ENCODE measurements at regions of chr1 and their contacts with region 1.

Region 1: DNA sequence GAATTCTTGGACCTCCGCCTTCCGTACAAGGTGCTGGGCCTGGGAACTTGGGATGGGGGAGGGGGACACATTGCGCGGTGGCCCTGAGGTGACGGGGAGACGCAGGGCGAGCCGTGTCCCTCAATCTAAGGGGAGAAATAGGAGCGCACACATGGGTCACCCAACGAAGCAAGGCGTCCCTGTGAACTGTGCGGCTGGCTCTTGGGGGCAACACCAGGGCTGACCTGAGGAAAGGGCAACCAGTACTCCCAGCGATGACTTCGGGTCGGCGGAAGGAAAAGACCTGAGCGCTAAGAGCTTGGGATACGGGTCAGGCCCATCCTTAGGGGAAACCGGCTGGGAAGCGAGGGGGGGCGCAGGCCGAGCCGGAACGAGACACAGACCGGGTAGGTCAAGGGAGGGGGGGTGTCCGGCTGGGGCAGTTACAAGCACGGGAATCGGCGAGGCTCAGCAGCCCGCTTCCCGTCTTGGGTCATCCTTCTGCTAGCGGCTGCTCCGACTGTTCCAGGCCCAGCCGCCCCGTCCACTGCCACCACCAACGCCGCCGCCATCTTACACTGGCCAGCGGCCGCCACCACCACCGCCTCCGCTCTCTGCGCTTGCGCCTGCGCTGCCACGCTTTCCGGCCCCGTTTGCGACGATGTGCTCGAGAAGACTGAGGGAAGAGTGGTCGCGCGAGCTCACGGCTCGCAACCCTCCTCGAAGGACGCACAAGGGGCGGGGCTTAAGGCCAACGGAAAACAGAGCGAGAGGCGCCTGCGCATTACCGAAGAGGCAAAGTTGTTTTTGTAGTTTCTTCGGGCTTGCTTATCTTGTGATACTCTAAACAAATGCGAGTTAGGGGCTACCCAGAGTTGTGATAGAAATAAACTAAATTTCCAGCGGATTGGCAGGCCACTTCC is at the start of gene DCAF8:
- DNase-seq: peak; percentile 90 to 99
- H3K4me3 ChIP-seq: peak within 1 kb of the TSS; percentile 85 to 98
- H3K27ac ChIP-seq: peak within 1 kb of the TSS; percentile 98
- H3K4me1 ChIP-seq: peaks cover 0 to 24% of the 10 kb centered on the region in 2 donors
- H3K27me3 ChIP-seq: no peaks in the 10 kb centered on the region
- CTCF ChIP-seq: no peak
- total RNA-seq, gene DCAF8: 68.9 TPM

Region 2: DNA sequence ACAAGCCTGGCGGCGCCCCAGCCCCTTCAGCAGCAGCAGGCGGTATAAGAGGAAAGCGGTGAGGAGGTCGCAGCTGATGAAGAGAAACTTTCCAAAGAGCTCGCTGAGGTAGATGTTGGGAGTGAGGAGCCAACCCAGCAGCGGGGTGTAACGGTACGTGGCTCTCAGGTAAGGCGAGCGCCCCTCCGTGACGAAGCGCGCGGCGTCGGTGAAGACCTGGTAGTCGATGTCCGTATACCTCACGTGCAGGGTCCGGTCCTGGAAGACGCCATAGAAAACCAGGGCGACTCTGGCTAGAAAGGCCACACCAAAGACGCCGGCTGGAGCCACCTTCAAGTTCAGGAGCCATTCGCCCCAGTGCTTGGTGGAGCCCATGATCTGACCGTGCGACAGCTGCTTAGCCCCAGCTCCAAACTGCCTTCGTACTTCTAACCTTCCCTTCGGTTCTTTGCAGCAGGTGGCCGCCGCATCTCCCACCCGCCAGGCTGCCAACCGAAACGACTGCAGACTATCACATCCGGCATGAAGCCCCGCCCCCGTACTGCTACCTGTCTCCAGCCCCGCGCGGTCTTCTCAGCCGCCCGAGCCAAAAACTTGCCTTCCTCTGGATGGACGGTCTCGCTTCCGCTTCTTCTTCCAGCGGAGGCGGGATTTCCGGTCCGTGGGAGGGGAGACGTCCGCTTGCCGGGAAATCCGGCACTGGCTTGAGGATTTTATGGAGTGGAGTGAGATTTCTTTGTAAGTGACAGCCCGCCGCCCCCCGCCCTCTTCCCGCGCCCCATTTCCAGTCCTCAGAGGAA is 230.6 kb before region 1 on chr1 and contains the start of gene PIGM:
- intact Hi-C with region 1: loop called (anchors 5 kb)
- DNase-seq: peak; percentile 73 to 96
- H3K4me3 ChIP-seq: peak within 1 kb of the TSS; percentile 78 to 82
- H3K27ac ChIP-seq: peak within 1 kb of the TSS; percentile 37 to 71
- H3K4me1 ChIP-seq: peaks cover 0 to 9% of the 10 kb centered on the region in 2 donors
- H3K27me3 ChIP-seq: no peaks in the 10 kb centered on the region
- CTCF ChIP-seq: no peak
- total RNA-seq, gene PIGM: 6.1 TPM

Region 3: GRCh38 chr1:160205242-160206035 is 56.7 kb before region 1 on chr1 and contains the start of gene PEA15:
- intact Hi-C with region 1: loop called (anchors 5 kb)
- DNase-seq: peak in 1 of 2 donors; percentile 85
- H3K4me3 ChIP-seq: peak within 1 kb of the TSS; percentile 87 to 94
- H3K27ac ChIP-seq: peak within 1 kb of the TSS; percentile 94 to 98
- H3K4me1 ChIP-seq: peaks cover under 1 to 42% of the 10 kb centered on the region in 2 donors
- H3K27me3 ChIP-seq: no peaks in the 10 kb centered on the region
- CTCF ChIP-seq: no peak
- total RNA-seq, gene PEA15: 178 TPM

Region 4: GRCh38 chr1:160284782-160285344 is 22.7 kb after region 1 on chr1 and contains the start of gene PEX19:
- intact Hi-C with region 1: loop called (anchors 1 kb)
- DNase-seq: peak; percentile 65 to 96
- H3K4me3 ChIP-seq: peak within 1 kb of the TSS; percentile 72 to 86
- H3K27ac ChIP-seq: peak within 1 kb of the TSS; percentile 82 to 87
- H3K4me1 ChIP-seq: peaks cover 4 to 16% of the 10 kb centered on the region in 2 donors
- H3K27me3 ChIP-seq: no peaks in the 10 kb centered on the region
- CTCF ChIP-seq: no peak
- total RNA-seq, gene PEX19: 36.6 TPM

Region 5: GRCh38 chr1:160296036-160296435 is 33.9 kb after region 1 on chr1:
- intact Hi-C with region 1: no loop called
- DNase-seq: no peak
- H3K4me3 ChIP-seq: no peak overlapping the region
- H3K27ac ChIP-seq: no peak overlapping the region
- H3K4me1 ChIP-seq: no peaks in the 10 kb centered on the region
- H3K27me3 ChIP-seq: no peaks in the 10 kb centered on the region
- CTCF ChIP-seq: no peak

Region 6: GRCh38 chr1:161159087-161159912 is 897.2 kb after region 1 on chr1 and contains the start of gene USP21:
- intact Hi-C with region 1: loop called (anchors 5 kb)
- DNase-seq: peak; percentile 61 to 96
- H3K4me3 ChIP-seq: peak within 1 kb of the TSS; percentile 86 to 92
- H3K27ac ChIP-seq: peak within 1 kb of the TSS; percentile 81 to 83
- H3K4me1 ChIP-seq: peaks cover 0 to 31% of the 10 kb centered on the region in 2 donors
- H3K27me3 ChIP-seq: no peaks in the 10 kb centered on the region
- CTCF ChIP-seq: peak; percentile 9 to 47 (median 37)
- total RNA-seq, gene USP21: 31.9 TPM

Region 7: GRCh38 chr1:161359291-161359690 is 1097.1 kb after region 1 on chr1:
- intact Hi-C with region 1: no loop called
- DNase-seq: no peak
- H3K4me3 ChIP-seq: no peak overlapping the region
- H3K27ac ChIP-seq: no peak overlapping the region
- H3K4me1 ChIP-seq: no peaks in the 10 kb centered on the region
- H3K27me3 ChIP-seq: no peaks in the 10 kb centered on the region
- CTCF ChIP-seq: no peak